Dorsolateral prefrontal cortex (tissue), 120 donors: ENCODE measurements at regions of chr9 and their contacts with region 1.

Region 1: DNA sequence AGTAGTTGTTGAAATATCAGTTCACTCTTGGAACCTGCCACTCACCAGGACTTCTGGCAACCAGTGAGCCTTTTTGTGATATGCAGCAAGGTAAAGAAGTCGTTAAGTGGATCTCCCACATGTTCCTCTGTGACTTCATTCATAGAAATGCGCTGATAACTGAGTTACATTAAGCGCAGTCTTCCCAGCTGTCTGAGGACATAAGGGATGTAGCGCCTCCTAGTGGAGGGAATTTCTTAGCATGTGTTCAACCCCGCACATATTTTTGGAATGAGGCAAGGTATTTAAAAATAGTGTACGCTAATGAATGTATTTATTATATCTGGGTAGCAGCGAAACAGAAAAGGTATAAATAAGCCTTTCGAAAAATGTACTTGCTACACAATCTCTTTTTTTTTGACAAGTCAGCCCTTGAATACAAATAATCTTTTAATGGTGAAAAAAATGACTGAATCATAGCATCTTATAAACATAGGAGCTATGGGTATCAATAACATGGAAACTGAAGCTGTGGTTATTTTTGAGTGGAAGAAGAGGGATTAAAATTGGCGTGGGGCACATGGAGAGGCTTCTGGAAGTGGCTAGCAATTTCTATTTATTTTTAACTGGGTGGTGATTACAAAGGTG is 38.0 kb downstream of the PALM2AKAP2 start:
- DNase-seq: peak in 5 of 10 donors; percentile 17 to 79 (median 45)
- H3K4me3 ChIP-seq: peak overlapping the region in 7 of 59 donors; percentile 0 to 28 (median 14)
- H3K27ac ChIP-seq: peak overlapping the region in 24 of 59 donors; percentile 4 to 82 (median 52)
- H3K27me3 ChIP-seq: no peaks in the 10 kb centered on the region
- CTCF ChIP-seq: peak; percentile 74 to 98 (median 90)

Region 2: GRCh38 chr9:109574068-109574882 is 243.7 kb before region 1 on chr9:
- intact Hi-C with region 1: loop called (anchors 5 kb)
- DNase-seq: peak in 3 of 10 donors; percentile 5 to 45 (median 10)
- H3K4me3 ChIP-seq: no peak overlapping the region
- H3K27ac ChIP-seq: peak overlapping the region in 1 of 59 donors; percentile 2
- H3K27me3 ChIP-seq: no peaks in the 10 kb centered on the region
- CTCF ChIP-seq: peak in 55 of 56 donors; percentile 60 to 92 (median 81)

Region 3: GRCh38 chr9:109640580-109641371 is 177.2 kb before region 1 on chr9:
- intact Hi-C with region 1: loop called in 1 of 2 experiments (anchors 10 kb)
- DNase-seq: peak; percentile 33 to 89 (median 77)
- H3K4me3 ChIP-seq: peak overlapping the region; percentile 34 to 88 (median 72)
- H3K27ac ChIP-seq: peak overlapping the region; percentile 4 to 98 (median 95)
- H3K27me3 ChIP-seq: peaks cover 0 to 11% (median 0%) of the 10 kb centered on the region in 45 donors
- CTCF ChIP-seq: peak in 7 of 56 donors; percentile 4 to 27 (median 12)

Region 4: DNA sequence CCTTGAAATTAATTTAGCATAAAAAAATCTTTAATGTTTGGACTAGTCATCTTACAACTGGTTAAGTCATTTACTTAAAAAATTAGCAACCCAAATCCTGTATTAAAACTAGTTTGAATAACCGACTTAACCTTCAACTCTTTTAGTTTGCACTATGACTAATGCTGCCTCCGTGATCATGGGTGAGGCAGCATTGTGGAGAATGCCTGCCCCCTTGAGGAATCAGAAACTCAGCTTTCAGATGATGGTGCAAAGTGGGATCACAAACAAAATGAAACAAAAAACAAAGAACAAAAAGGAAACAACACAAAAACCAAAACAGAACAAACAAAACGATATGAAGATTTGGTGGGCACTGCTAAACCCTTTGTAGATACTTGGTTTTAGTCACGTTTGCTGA is 165.0 kb before region 1 on chr9:
- intact Hi-C with region 1: loop called (anchors 10 kb)
- DNase-seq: peak in 2 of 10 donors; percentile 53 to 58
- H3K4me3 ChIP-seq: peak overlapping the region in 5 of 59 donors; percentile 9 to 24 (median 9)
- H3K27ac ChIP-seq: peak overlapping the region in 49 of 59 donors; percentile 14 to 86 (median 62)
- H3K27me3 ChIP-seq: no peaks in the 10 kb centered on the region
- CTCF ChIP-seq: peak in 55 of 56 donors; percentile 27 to 86 (median 63)

Region 5: DNA sequence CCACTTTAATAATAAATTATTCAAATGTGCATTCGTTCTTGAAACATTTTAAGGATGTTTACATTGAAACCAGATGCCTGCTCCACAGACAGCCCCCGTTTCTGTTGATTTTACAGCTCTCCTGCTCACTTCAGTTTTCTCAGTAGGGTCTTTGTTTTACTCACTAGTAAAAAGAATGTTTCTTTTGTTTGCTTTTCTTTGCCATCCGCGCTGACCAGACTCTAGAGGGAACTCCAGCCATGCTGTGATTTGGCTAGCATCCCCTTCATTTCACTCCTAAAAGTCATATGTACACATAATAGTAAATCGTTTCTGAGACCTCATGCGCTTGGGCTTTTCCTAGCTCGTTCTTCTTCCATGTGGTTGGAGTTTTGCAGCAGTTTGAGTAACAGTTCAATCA is 66.7 kb before region 1 on chr9:
- intact Hi-C with region 1: loop called (anchors 5 to 10 kb)
- DNase-seq: peak in 1 of 10 donors; percentile 39
- H3K4me3 ChIP-seq: peak overlapping the region in 6 of 59 donors; percentile 2 to 16 (median 14)
- H3K27ac ChIP-seq: peak overlapping the region in 9 of 59 donors; percentile 18 to 57 (median 35)
- H3K27me3 ChIP-seq: no peaks in the 10 kb centered on the region
- CTCF ChIP-seq: peak in 23 of 56 donors; percentile 6 to 53 (median 31)

Region 6: GRCh38 chr9:109779711-109780452 is 38.1 kb before region 1 on chr9 and contains the start of gene PALM2AKAP2:
- intact Hi-C with region 1: loop called in 1 of 2 experiments (anchors 5 kb)
- DNase-seq: peak in 9 of 10 donors; percentile 23 to 81 (median 54)
- H3K4me3 ChIP-seq: peak within 1 kb of the TSS; percentile 44 to 80 (median 65)
- H3K27ac ChIP-seq: peak within 1 kb of the TSS in 24 of 59 donors; percentile 16 to 73 (median 52)
- H3K27me3 ChIP-seq: peaks cover 0 to 3% (median 0%) of the 10 kb centered on the region in 45 donors
- CTCF ChIP-seq: peak in 32 of 56 donors; percentile 9 to 66 (median 30)
- total RNA-seq, gene PALM2AKAP2: 8.5 to 32.5 (median 20.2) TPM

Region 7: GRCh38 chr9:109859433-109859832 is 41.5 kb after region 1 on chr9:
- intact Hi-C with region 1: no loop called
- DNase-seq: no peak
- H3K4me3 ChIP-seq: no peak overlapping the region
- H3K27ac ChIP-seq: peak overlapping the region in 57 of 59 donors; percentile 42 to 99 (median 96)
- H3K27me3 ChIP-seq: no peaks in the 10 kb centered on the region
- CTCF ChIP-seq: peak in 54 of 56 donors; percentile 14 to 65 (median 42)

Region 8: DNA sequence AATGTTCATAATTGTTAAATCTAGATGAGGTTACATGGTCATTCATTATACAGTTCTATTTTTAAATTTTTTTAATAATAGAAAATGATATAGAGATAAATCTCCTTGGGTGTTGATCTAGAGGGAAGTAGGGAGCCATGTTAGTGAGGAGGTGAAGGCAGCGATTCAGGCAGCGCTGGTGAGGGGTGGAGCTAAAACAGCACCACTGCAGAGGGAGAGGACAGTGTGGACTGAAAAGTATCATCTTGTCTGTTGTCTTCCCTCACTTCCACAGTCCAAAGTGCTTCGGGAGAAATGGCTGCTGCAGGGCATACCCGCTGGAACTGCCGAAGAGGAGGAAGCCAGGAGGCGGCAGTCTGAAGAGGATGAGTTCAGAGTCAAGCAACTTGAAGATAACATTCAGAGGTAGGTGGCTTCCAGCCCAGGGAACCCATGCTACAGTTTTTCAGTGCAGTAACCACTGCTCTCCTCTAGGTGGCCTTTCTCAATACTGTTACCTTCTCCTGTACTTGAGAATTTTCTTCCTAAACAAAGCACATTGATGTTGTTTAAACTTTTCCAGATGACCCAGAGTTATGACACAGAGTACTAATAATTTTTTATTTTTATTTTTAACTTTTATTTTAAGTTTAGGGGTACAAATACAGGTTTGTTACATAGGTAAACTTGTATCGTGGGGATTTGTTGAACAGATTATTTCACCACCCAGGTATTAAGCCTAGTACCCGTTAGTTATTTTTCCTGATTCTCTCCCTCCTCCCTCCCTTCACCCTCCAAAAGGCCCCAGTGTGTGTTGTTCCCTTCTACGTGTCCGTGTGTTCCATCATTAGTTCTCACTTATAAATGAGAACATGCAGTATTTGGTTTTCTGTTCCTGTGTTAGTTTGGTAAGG is 62.6 kb after region 1 on chr9:
- intact Hi-C with region 1: loop called (anchors 5 to 10 kb)
- DNase-seq: no peak
- H3K4me3 ChIP-seq: no peak overlapping the region
- H3K27ac ChIP-seq: peak overlapping the region in 11 of 59 donors; percentile 1 to 50 (median 28)
- H3K27me3 ChIP-seq: no peaks in the 10 kb centered on the region
- CTCF ChIP-seq: peak in 55 of 56 donors; percentile 27 to 66 (median 51)

Region 9: DNA sequence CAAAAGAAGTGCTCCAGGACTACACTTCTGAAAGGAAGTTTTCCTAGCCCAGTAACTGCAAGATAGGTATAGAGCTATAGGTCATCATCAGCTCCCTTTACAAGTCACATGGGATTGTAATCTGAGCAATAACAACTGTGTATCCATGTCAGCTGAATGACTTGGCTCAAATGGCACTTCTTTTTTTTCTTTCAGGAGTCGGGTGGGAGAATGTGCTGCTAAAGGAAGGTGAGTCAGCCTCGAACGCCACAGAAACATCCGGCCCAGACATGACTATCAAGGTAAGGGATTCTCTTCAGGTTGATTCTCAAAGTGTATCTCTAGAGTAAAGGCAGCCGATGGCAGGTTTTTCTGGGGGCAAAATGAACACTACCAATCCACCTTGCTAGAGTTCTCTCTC is 197.8 kb after region 1 on chr9:
- intact Hi-C with region 1: no loop called
- DNase-seq: no peak
- H3K4me3 ChIP-seq: no peak overlapping the region
- H3K27ac ChIP-seq: no peak overlapping the region
- H3K27me3 ChIP-seq: no peaks in the 10 kb centered on the region
- CTCF ChIP-seq: no peak